B cell (primary cell): ENCODE measurements at regions of chr11 and their contacts with region 1.

Region 1: DNA sequence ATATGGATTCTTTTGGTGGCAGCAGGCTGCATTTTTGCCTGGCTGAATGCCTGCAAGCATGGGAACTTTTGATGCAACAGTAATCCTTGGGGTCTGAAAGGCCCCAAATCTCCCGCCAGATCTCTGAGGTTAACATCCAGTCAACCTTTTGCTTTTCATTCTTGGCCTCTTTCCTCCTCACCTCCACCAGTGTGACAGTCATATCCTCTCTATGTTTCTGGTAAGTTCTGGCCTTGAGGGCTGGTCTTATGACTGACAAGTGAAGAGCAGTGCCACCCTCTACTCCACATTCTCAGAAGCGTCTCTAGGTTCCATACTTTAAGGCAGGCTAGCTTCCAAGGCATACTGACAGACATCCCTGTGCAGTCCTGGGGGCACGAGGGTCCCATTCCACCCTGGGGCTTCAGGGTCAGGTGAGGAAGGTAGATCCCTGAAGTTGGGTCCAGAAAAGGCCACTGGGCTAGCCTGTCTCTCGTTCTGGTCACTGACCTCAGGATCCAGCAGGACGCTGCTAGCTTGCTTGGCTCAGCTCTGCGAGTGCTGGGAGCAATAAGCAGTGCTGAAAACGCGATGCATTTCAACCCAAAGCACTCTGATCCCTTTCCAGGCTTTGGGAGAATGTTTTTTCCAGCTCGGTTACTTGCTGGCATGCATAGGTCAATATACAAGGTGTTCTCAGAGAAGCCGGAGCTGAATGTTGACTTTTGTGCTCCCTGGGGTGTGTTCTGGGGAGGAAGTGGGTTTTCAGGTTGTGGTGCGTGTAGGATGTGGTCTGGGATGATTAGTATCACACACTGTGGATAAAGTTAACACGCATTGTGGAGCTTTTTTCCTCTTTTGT is 75.2 kb downstream of the PTPRJ start:
- DNase-seq: peak; percentile 49
- ATAC-seq: peak; percentile 62
- H3K4me3 ChIP-seq: peak overlapping the region in 4 of 5 experiments; percentile 24 to 31 (median 27)
- H3K4me3 Mint-ChIP-seq: peak overlapping the region; percentile 77
- H3K27ac ChIP-seq: no peak overlapping the region
- H3K27ac Mint-ChIP-seq: peak overlapping the region; percentile 27
- H3K4me1 ChIP-seq: peaks cover 70 to 76% of the 10 kb centered on the region in 2 donors
- H3K4me1 Mint-ChIP-seq: peaks cover 75% of the 10 kb centered on the region
- H3K27me3 ChIP-seq: no peaks in the 10 kb centered on the region
- H3K27me3 Mint-ChIP-seq: no peaks in the 10 kb centered on the region
- CTCF ChIP-seq: no peak

Region 2: GRCh38 chr11:48013269-48013901 is 42.1 kb before region 1 on chr11:
- CTCF ChIA-PET with region 1: no interaction called
- POLR2A ChIA-PET with region 1: interaction called, 3 read pairs
- intact Hi-C with region 1: loop called (anchors 5 kb)
- DNase-seq: peak; percentile 72
- ATAC-seq: peak; percentile 90
- H3K4me3 ChIP-seq: peak overlapping the region in 1 of 5 experiments; percentile 28
- H3K4me3 Mint-ChIP-seq: peak overlapping the region; percentile 80
- H3K27ac ChIP-seq: peak overlapping the region; percentile 66 to 76
- H3K27ac Mint-ChIP-seq: peak overlapping the region; percentile 94
- H3K4me1 ChIP-seq: peaks cover 59 to 75% of the 10 kb centered on the region in 2 donors
- H3K4me1 Mint-ChIP-seq: peaks cover 69% of the 10 kb centered on the region
- H3K27me3 ChIP-seq: no peaks in the 10 kb centered on the region
- H3K27me3 Mint-ChIP-seq: no peaks in the 10 kb centered on the region
- CTCF ChIP-seq: no peak

Region 3: DNA sequence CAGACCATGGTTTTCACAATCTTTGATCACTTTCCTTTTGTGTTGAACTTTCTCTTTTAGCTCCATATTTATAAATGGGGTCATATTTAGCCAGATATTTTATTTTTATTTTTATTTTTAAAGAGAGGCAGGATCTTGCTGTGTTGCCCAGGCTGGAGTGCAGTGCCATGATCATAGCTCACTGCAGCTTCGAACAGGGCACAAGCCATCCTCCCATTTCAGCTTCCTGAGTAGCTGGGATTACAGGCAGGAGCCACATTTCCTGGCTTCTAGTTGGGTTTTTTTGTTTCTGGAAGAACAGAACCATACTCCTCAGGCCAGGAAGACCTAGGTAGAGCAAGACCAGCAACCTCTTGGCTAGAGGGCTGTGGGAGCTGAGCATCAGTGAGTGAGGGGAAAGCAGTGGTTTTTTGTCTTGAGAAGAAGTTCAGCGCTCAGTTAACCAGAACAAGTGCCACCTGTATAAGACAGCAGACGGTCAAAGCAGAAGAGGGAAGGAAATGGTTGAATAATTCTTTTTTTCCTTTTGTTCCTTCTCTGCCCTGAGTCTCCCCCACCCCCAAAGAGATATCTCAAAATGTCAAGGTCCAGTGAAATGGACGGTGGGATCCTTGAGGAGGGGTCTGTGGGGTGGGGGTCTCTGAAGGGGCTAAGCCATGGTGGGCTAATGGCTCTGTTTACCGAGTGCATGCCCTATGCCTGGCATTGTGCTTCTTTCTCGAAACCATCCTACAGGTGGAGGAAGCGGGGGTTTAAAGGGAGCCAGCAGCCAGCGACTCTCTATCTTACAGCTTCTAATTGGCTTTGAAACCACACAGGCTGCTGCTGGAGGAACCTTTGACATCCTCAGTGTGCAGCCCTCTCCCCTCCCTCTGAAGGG is 12.2 kb before region 1 on chr11:
- CTCF ChIA-PET with region 1: interaction called, 3 read pairs
- POLR2A ChIA-PET with region 1: no interaction called
- intact Hi-C with region 1: loop called (anchors 1 kb)
- DNase-seq: peak; percentile 67
- ATAC-seq: peak; percentile 76
- H3K4me3 ChIP-seq: peak overlapping the region in 4 of 5 experiments; percentile 12 to 44 (median 16)
- H3K4me3 Mint-ChIP-seq: peak overlapping the region; percentile 64
- H3K27ac ChIP-seq: peak overlapping the region; percentile 57 to 71
- H3K27ac Mint-ChIP-seq: peak overlapping the region; percentile 72
- H3K4me1 ChIP-seq: peaks cover 43 to 65% of the 10 kb centered on the region in 2 donors
- H3K4me1 Mint-ChIP-seq: peaks cover 64% of the 10 kb centered on the region
- H3K27me3 ChIP-seq: no peaks in the 10 kb centered on the region
- H3K27me3 Mint-ChIP-seq: no peaks in the 10 kb centered on the region
- CTCF ChIP-seq: no peak